Psoas muscle (tissue), 8 donors: ENCODE measurements at regions of chr2 and their contacts with region 1.

Region 1: GRCh38 chr2:202577250-202578183 is 57.3 kb upstream of the FAM117B start:
- DNase-seq: no peak
- ATAC-seq: no peak
- H3K4me3 ChIP-seq: no peak overlapping the region
- H3K27ac ChIP-seq: no peak overlapping the region
- H3K4me1 ChIP-seq: no peaks in the 10 kb centered on the region
- H3K27me3 ChIP-seq: no peaks in the 10 kb centered on the region
- CTCF ChIP-seq: no peak

Region 2: DNA sequence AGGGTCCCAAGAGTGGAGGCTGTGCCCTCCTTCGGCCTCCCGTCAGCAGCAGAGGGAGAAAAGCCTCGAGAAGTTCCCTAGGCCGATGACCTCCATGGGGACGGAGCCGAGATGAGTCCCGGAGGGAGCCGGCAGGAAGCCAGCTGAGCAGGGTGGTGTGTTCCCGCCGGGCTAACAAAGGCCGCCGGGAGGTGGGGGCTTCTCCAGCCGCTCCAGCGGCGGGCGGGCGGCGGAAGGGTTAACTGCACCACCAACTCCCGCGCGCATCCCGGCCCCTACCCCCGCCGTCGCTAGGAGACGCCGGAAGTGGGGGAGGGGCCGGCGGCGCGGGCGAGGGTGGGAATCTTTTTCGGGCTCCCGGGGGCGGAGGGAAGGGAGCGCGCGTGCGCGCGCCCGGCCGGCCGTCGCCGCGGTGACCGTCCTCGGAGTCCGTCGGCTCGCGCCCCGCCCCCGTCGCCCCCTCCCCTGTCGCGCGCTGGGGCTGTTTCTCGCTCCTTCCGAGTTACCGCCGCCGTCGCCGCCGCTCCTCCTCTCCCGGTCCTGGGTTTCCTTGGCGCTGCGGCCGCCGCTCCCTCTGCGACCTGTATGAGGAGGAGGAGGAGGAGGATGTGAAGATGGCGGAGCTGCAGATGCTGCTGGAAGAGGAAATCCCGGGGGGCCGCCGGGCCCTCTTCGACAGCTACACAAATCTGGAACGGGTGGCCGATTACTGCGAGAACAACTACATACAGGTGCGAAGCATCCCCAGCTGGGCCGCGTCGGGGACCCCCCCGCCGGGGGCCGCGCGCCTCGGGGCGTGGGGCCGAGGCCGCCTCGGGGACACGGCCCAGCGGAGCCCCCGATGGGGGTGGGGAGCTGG is 750.6 kb after region 1 on chr2 and contains the start of gene ABI2:
- intact Hi-C with region 1: loop called in 1 of 2 experiments (anchors 10 kb)
- DNase-seq: peak; percentile 88 to 91
- ATAC-seq: peak; percentile 90 to 98 (median 96)
- H3K4me3 ChIP-seq: peak within 1 kb of the TSS; percentile 98
- H3K27ac ChIP-seq: peak within 1 kb of the TSS; percentile 62
- H3K4me1 ChIP-seq: peaks cover 4% of the 10 kb centered on the region
- H3K27me3 ChIP-seq: no peaks in the 10 kb centered on the region
- CTCF ChIP-seq: no peak
- total RNA-seq, gene ABI2: 12.9 to 16.9 (median 15.1) TPM